Cardiac septum (tissue), 1 donor: ENCODE measurements at regions of chr1 and their contacts with region 1.

Region 1: DNA sequence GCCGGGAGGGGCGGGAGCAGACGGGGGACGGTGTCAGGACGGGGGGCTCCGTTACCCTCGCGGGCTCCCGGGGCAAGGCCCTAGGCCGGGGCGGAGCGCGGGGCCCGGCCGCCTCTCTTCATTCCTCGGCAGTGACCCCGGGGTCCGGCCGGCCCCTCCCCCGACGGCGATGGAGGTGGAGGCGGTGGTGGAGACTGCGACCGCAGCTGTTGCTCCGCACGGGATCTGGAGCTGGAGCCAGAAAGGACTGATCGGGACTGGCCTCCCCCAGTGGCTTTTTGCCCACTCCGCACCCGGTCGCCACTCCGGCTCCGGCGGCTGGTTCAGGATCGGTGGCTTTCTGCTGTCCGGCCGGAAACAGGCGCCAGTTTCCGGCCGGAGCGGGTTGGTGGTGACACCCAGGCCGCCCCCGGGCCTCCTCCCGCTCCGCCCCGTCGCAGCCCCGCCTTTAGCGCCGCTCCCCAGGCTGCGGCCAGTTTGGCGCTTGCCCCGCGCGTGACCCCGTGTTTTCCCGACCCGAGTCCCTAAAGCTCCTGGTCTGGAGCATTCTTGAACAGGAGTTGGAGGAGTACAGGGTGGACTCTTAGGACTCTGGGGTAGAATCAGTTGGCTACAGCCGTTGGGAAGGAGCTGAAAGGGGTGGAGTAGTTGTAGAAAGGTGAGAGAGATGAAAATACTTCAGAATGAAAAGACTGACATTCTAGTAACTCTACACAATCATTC is at the start of gene OTUD7B:
- DNase-seq: peak; percentile 92
- total RNA-seq, gene OTUD7B: 32.6 TPM

Region 2: GRCh38 chr1:150053926-150054325 is 43.4 kb after region 1 on chr1:
- intact Hi-C with region 1: loop called (anchors 5 kb)
- DNase-seq: no peak

Region 3: DNA sequence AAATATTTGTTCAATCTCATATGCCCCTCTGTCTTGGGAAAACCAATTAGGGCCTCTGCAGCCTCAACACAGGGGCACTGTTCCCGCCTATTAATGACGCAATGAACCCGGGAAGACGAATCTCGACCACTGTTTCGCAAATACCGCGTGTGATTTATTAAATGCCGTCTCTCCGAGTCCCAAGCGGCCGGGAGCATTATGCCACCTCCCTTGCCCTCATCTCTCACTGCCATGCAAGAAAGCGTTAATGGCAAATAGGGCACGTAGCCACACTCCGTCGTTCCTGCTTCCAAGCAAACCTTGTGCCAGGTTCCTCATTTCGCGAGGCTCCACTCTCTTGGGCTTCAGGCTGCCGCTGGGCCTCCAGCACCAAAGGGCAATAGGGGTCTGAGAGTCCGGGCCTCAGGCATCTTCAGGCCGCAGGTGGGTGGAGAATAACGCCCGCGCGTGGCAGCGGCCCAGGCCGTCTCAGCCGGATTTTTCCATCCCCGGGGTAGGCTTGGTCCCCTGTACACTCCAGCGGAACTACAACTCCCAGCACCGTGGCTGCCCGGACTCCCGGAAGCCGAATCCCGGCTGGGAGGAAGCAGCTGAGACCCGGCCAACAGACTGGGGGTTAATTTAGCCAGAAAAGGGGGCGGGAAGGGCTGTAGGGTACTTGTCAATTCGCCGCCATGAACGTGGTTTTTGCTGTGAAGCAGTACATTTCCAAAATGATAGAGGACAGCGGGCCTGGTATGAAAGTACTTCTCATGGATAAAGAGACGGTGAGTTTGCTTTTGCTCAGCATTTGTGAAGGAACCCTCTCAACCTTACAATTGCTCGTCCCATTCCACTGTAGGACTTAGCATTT is 56.9 kb after region 1 on chr1 and contains the start of gene VPS45:
- intact Hi-C with region 1: loop called (anchors 1 kb)
- DNase-seq: peak; percentile 96
- total RNA-seq, gene VPS45: 71.6 TPM